ENCODE measurements at regions of chr16 and their contacts with region 1.

Region 1: GRCh38 chr16:29784901-29785500 is 5.5 kb upstream of the KIF22 start:
- DNase-seq: peak; percentile 79
- H3K4me3 Mint-ChIP-seq: peak overlapping the region; percentile 25
- H3K27ac Mint-ChIP-seq: peak overlapping the region; percentile 50
- H3K4me1 Mint-ChIP-seq: peaks cover 31% of the 10 kb centered on the region
- H3K27me3 Mint-ChIP-seq: peaks cover 24% of the 10 kb centered on the region

Region 2: GRCh38 chr16:29729116-29729521 is 55.9 kb before region 1 on chr16:
- CTCF ChIA-PET with region 1: interaction called, 23 read pairs
- DNase-seq: no peak
- H3K4me3 Mint-ChIP-seq: no peak overlapping the region
- H3K27ac Mint-ChIP-seq: no peak overlapping the region
- H3K4me1 Mint-ChIP-seq: peaks cover 35% of the 10 kb centered on the region
- H3K27me3 Mint-ChIP-seq: peaks cover 35% of the 10 kb centered on the region

Region 3: GRCh38 chr16:29738514-29738913 is 46.5 kb before region 1 on chr16:
- CTCF ChIA-PET with region 1: interaction called, 23 read pairs
- DNase-seq: peak; percentile 75
- H3K4me3 Mint-ChIP-seq: no peak overlapping the region
- H3K27ac Mint-ChIP-seq: peak overlapping the region; percentile 66
- H3K4me1 Mint-ChIP-seq: peaks cover 77% of the 10 kb centered on the region
- H3K27me3 Mint-ChIP-seq: no peaks in the 10 kb centered on the region